Activated CD8-positive, alpha-beta T cell treated with anti-CD3 and anti-CD28 coated beads, Interleukin-2, amount 10 ng/mL, durations not matched to agents 7 days and 5 days (primary cell): ENCODE measurements at regions of chr17 and their contacts with region 1.

Region 1: DNA sequence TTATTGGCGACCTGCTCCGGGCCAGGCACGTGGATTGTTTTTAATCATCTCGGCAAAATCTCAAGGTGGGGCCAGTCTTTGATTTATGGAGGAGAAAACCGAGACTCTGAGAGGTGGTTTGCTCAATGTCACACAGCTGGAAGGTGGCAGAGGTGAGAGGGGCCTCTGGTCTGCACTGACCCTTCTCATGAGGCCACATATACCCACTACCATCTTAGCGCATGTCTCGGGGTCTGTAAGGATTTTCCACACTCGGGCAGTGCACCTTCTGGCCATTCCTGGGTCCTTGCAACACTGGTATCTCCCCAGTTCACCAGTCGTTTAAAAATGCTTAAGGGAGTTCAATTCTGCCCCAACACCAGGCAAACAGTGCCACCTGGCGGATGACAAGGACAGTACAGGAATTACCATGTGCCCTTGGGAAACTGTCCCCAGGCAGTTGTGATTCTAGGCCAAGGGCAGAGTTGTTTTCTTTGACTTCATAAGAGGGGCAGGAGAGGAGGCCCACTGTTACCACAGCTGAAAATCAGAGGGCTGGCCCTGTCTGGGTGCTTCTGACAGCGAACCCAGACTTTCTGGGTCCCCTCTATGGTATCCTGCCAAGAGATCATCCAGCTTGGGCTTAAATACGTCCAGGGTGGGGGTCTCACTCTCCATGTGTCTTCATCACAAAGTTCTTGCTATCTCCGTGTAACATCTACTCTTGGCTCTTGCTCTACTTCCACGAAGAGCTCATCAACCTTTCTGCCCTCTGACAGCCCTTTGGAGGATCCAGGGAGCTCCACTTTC is 39.4 kb upstream of the RAI1 start:
- DNase-seq: peak; percentile 84
- ATAC-seq: peak; percentile 88
- H3K4me3 Mint-ChIP-seq: no peak overlapping the region
- H3K27ac Mint-ChIP-seq: no peak overlapping the region
- H3K4me1 Mint-ChIP-seq: no peaks in the 10 kb centered on the region
- H3K27me3 Mint-ChIP-seq: peaks cover under 1% of the 10 kb centered on the region

Region 2: DNA sequence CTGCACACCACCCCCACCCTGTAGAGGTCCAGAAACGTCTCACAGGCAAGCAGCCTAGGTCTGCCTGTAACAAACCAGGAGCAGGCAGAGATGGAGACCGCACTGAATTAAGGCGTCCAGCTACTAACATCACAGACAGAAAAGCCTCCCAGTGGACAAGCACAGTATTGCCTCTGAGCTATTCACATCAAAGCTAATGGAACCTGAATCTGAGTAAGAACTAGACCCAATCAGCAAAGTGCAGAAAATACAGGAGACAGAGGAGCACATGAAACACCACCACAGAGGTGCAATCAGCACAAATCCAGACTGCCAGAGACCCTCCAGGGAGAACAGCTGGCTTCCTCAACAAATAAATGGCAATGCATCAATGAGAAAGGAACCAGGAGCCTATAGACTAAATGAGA is 28.1 kb before region 1 on chr17:
- CTCF ChIA-PET with region 1: interaction called, 17 read pairs
- POLR2A ChIA-PET with region 1: no interaction called
- DNase-seq: peak; percentile 71
- ATAC-seq: peak; percentile 96
- H3K4me3 Mint-ChIP-seq: no peak overlapping the region
- H3K27ac Mint-ChIP-seq: no peak overlapping the region
- H3K4me1 Mint-ChIP-seq: no peaks in the 10 kb centered on the region
- H3K27me3 Mint-ChIP-seq: no peaks in the 10 kb centered on the region